ENCODE measurements at regions of chr5 and their contacts with region 1.

Region 1: GRCh38 chr5:115098041-115098702 is 71.5 kb downstream of the TRIM36 start:
- DNase-seq: peak; percentile 68
- ATAC-seq: peak; percentile 94
- H3K4me3 ChIP-seq: no peak overlapping the region
- H3K27ac ChIP-seq: no peak overlapping the region
- H3K4me1 ChIP-seq: no peaks in the 10 kb centered on the region
- H3K27me3 ChIP-seq: peaks cover 25% of the 10 kb centered on the region
- CTCF ChIP-seq: peak; percentile 91

Region 2: GRCh38 chr5:115180165-115180709 is 82.1 kb after region 1 on chr5:
- CTCF ChIA-PET with region 1: no interaction called
- POLR2A ChIA-PET with region 1: no interaction called
- intact Hi-C with region 1: loop called (anchors 5 kb)
- DNase-seq: peak; percentile 11
- ATAC-seq: peak; percentile 72
- H3K4me3 ChIP-seq: peak overlapping the region; percentile 67
- H3K27ac ChIP-seq: no peak overlapping the region
- H3K4me1 ChIP-seq: peaks cover 14% of the 10 kb centered on the region; the same call in 1 of the 2 replicates
- H3K27me3 ChIP-seq: peaks cover 76% of the 10 kb centered on the region
- CTCF ChIP-seq: no peak